ENCODE measurements at regions of chr3 and their contacts with region 1.

Region 1: GRCh38 chr3:57169872-57170623 is 4.9 kb upstream of the IL17RD start:
- DNase-seq: peak; percentile 28 to 77 (median 51)
- ATAC-seq: peak; percentile 56
- H3K4me3 ChIP-seq: peak overlapping the region; percentile 38
- H3K4me3 Mint-ChIP-seq: no peak overlapping the region
- H3K27ac ChIP-seq: no peak overlapping the region
- H3K27ac Mint-ChIP-seq: no peak overlapping the region
- H3K4me1 ChIP-seq: peaks cover 8% of the 10 kb centered on the region
- H3K4me1 Mint-ChIP-seq: peaks cover 7% of the 10 kb centered on the region
- H3K27me3 ChIP-seq: peaks cover 30 to 47% of the 10 kb centered on the region in 2 experiments
- H3K27me3 Mint-ChIP-seq: peaks cover 78% of the 10 kb centered on the region
- CTCF ChIP-seq: peak; percentile 97

Region 2: DNA sequence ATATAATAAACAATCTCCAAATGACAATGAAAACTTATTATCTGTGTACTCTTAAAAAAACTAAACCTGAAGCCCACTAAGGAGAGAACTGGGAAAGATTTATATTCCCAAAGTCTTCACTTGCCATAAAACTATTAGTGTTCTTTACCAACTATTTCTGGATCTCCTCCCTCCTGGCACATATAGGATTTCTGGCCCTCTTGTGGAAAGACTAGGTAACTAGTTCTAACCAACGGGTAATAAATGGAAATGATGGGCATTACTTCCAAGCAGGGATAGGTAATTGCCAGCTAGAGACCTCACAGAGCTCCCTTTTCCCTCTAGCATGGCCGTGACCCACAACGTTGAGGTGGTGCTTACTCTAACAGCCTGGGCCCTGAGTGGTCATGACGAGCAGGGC is 264.0 kb after region 1 on chr3:
- CTCF ChIA-PET with region 1: no interaction called
- POLR2A ChIA-PET with region 1: no interaction called
- intact Hi-C with region 1: loop called in 1 of 2 experiments (anchors 10 kb)
- DNase-seq: peak in 1 of 14 experiments; percentile 2
- ATAC-seq: no peak
- H3K4me3 ChIP-seq: no peak overlapping the region
- H3K4me3 Mint-ChIP-seq: no peak overlapping the region
- H3K27ac ChIP-seq: no peak overlapping the region
- H3K27ac Mint-ChIP-seq: no peak overlapping the region
- H3K4me1 ChIP-seq: no peaks in the 10 kb centered on the region
- H3K4me1 Mint-ChIP-seq: no peaks in the 10 kb centered on the region
- H3K27me3 ChIP-seq: no peaks in the 10 kb centered on the region
- H3K27me3 Mint-ChIP-seq: peaks cover 9% of the 10 kb centered on the region
- CTCF ChIP-seq: peak; percentile 17

Region 3: GRCh38 chr3:57464801-57465200 is 294.8 kb after region 1 on chr3:
- CTCF ChIA-PET with region 1: no interaction called
- POLR2A ChIA-PET with region 1: no interaction called
- intact Hi-C with region 1: no loop called
- DNase-seq: no peak
- ATAC-seq: no peak
- H3K4me3 ChIP-seq: no peak overlapping the region
- H3K4me3 Mint-ChIP-seq: no peak overlapping the region
- H3K27ac ChIP-seq: no peak overlapping the region
- H3K27ac Mint-ChIP-seq: no peak overlapping the region
- H3K4me1 ChIP-seq: no peaks in the 10 kb centered on the region
- H3K4me1 Mint-ChIP-seq: peaks cover 4% of the 10 kb centered on the region
- H3K27me3 ChIP-seq: no peaks in the 10 kb centered on the region
- H3K27me3 Mint-ChIP-seq: no peaks in the 10 kb centered on the region
- CTCF ChIP-seq: no peak

Region 4: DNA sequence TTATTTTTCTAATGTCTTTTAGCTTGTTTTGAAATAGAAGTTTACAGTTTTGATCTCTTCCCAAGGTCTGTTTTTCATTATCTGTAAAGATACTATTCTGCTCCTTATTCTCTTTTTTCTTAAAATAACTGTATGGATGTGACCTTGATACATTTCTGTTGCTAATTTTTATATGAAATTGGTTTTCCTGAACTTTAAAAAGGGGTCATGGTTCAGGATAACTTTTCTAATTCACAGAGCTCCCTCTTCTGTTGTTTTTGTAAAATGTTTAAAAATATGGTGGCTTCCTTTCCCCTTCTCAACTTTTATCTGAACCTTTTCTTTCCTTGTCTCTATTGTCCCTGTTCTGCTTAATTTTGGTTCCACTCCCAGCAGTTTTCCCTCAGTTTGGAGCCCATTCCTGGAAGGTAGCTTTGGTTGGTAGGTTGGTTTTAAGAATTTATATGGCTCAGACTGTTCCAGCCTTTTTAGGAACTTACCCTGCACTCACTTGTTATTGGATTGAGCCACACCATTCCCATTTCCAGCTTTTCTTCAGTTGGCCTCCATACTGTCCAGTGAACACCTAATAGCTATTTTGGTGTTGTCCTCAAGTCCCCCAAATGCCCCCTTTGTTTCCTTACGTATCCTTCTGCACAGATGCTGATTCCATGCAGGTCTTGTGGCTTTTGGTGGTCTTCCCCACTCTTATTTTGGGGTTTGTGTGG is 656.4 kb after region 1 on chr3:
- CTCF ChIA-PET with region 1: no interaction called
- POLR2A ChIA-PET with region 1: no interaction called
- intact Hi-C with region 1: loop called in 1 of 2 experiments (anchors 10 kb)
- DNase-seq: peak in 1 of 14 experiments; percentile 23
- ATAC-seq: no peak
- H3K4me3 ChIP-seq: no peak overlapping the region
- H3K4me3 Mint-ChIP-seq: no peak overlapping the region
- H3K27ac ChIP-seq: no peak overlapping the region
- H3K27ac Mint-ChIP-seq: no peak overlapping the region
- H3K4me1 ChIP-seq: no peaks in the 10 kb centered on the region
- H3K4me1 Mint-ChIP-seq: peaks cover 37% of the 10 kb centered on the region
- H3K27me3 ChIP-seq: no peaks in the 10 kb centered on the region
- H3K27me3 Mint-ChIP-seq: no peaks in the 10 kb centered on the region
- CTCF ChIP-seq: peak; percentile 56

Measured in CD4-positive, alpha-beta T cell (primary cell).